ENCODE measurements at regions of chr11 and their contacts with region 1.

Region 1: GRCh38 chr11:76124905-76125770 is 81.2 kb downstream of the WNT11 start:
- DNase-seq: no peak

Region 2: GRCh38 chr11:75850787-75851186 is 274.4 kb before region 1 on chr11:
- intact Hi-C with region 1: no loop called
- DNase-seq: no peak

Region 3: GRCh38 chr11:76062733-76063132 is 62.4 kb before region 1 on chr11:
- intact Hi-C with region 1: no loop called
- DNase-seq: no peak

Region 4: DNA sequence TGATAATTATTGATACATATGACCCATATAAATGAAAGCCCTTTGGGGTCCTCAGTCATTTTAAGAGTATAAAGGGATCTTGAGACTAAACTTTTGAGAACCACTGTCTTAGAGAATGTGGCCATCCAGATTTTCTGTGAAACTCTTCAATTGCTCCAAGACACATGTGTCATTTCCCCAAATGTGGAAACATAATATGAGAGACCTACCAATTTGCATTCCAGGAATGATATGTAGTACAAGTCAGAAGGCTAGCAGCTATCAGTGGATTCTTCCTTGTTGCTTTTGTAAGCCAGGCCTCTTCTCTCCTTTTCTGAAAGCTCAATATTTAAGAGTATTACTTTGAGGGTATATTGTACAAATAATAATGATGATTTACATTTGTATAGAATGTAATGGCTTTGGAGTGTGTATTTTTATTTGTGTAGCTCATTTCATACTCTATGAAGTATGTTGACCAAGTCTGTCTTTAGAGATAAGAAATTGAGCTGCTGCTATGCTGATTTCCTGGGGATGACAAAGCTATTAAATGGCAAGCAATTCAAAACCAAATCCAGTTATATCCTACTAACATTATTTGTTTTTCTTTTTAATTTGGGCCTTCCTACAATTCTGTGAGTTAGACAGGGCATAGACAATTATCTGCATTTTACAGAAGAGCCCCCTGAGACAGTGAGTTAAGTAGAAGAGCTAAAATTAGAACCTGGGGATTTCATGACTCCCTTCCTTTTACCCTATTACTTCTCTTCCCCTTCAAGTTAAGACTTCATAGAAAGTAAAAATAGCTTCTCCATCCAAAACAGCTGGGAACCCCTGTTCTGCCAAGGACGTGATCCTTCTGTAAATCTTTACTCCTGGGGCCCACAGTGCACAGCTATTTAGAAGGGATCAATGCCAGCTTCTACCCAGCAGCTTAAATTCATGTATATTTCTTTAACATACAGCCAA is 50.7 kb before region 1 on chr11:
- intact Hi-C with region 1: loop called (anchors 2 kb)
- DNase-seq: no peak

Region 5: GRCh38 chr11:76637491-76638269 is 512.5 kb after region 1 on chr11:
- intact Hi-C with region 1: no loop called
- DNase-seq: no peak